MCF 10A (cell line): ENCODE measurements at regions of chr12 and their contacts with region 1.

Region 1: DNA sequence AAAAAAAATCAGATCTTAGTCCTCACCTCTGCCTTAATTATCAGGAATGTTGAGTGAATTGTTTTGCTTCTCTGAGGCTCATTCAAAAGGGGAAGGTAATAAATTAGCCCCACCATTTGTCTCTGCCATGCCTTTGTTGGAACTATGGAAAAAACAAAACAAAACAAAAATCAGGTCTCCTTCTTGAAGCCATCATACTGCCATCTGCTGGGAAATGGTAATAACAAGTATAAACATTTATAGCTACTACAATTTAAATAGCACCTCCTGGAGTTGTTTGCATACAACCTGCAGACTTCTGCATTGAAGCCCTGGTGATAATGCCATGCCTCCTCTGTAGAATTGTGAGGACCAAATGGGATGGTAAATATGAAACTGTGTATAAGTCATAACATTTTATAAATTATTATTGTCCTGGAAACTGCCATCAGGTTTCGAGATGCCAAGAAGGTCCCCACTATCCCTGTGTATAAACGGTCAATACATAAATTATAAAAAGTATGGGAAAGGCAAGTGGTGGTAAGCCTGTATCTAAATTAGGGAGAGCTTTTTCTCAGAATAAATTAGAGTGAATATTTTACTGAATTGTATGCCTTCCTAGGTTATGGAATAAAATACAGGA is 87.2 kb upstream of the FGD4 start:
- DNase-seq: peak; percentile 68
- H3K4me3 Mint-ChIP-seq: no peak overlapping the region
- H3K27ac Mint-ChIP-seq: peak overlapping the region; percentile 68
- H3K4me1 Mint-ChIP-seq: peaks cover 7% of the 10 kb centered on the region
- H3K27me3 Mint-ChIP-seq: no peaks in the 10 kb centered on the region
- CTCF ChIP-seq: peak; percentile 58

Region 2: DNA sequence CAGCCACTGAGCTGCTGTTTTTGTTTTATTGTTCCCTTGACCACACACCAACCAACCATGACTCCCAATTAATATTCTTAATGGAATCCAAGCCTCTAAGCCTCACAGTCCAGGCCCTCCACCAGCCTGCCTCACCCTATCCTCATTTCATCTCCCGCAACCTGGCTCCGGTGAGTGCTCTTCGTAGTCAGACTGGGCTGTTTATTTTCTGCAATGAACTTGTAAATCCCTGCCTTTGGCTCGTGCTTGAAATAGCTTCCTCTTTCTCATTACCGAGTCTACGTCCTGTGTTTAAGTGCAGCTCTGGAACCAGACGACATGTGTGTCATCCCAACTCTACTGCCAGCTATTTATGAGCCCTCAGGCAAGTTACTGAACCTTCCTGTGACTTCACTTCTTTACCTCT is 665.1 kb before region 1 on chr12:
- CTCF ChIA-PET with region 1: interaction called, 49 read pairs
- POLR2A ChIA-PET with region 1: no interaction called
- intact Hi-C with region 1: loop called (anchors 2 kb)
- DNase-seq: peak; percentile 49
- H3K4me3 Mint-ChIP-seq: no peak overlapping the region
- H3K27ac Mint-ChIP-seq: peak overlapping the region; percentile 28
- H3K4me1 Mint-ChIP-seq: peaks cover 10% of the 10 kb centered on the region
- H3K27me3 Mint-ChIP-seq: no peaks in the 10 kb centered on the region
- CTCF ChIP-seq: no peak

Region 3: DNA sequence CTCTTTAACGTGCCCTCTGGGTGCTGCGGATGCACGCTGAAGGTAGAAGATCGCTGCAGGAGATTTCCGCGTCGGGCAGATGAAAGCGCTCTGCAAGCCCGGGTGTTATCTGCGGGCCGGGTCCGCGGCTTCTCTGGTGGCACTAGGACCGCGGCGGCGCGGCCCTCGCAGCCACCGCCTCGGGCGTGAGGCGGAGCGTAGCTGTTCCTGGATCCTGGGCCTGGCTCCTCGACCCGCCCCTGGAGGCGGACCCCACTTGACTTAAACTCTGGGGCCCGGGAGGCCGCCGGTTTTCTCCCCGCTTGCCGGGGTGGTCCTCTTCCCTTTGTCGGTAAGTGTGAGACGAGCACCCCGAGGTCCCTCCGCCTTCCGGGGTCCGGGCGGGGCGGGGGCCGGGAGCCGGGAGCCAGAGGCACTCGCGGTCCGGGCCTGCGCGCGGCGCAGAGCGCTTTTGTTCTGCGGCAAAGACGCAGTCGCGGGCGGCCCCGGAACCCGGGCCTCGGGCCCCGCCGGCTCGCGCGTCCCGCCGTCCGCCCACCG is 352.9 kb before region 1 on chr12 and contains the start of gene RESF1:
- CTCF ChIA-PET with region 1: interaction called, 6 read pairs
- POLR2A ChIA-PET with region 1: interaction called, 3 read pairs
- intact Hi-C with region 1: loop called (anchors 5 kb)
- DNase-seq: peak; percentile 85
- H3K4me3 Mint-ChIP-seq: peak within 1 kb of the TSS; percentile 84
- H3K27ac Mint-ChIP-seq: peak within 1 kb of the TSS; percentile 16
- H3K4me1 Mint-ChIP-seq: peaks cover 17% of the 10 kb centered on the region
- H3K27me3 Mint-ChIP-seq: no peaks in the 10 kb centered on the region
- CTCF ChIP-seq: no peak
- total RNA-seq, gene RESF1: 14.7 and 18.7 TPM in 2 replicates

Region 4: GRCh38 chr12:32025906-32026305 is 286.3 kb before region 1 on chr12:
- CTCF ChIA-PET with region 1: no interaction called
- POLR2A ChIA-PET with region 1: no interaction called
- intact Hi-C with region 1: no loop called
- DNase-seq: no peak
- H3K4me3 Mint-ChIP-seq: no peak overlapping the region
- H3K27ac Mint-ChIP-seq: no peak overlapping the region
- H3K4me1 Mint-ChIP-seq: no peaks in the 10 kb centered on the region
- H3K27me3 Mint-ChIP-seq: peaks cover 4% of the 10 kb centered on the region
- CTCF ChIP-seq: no peak

Region 5: GRCh38 chr12:32062881-32063280 is 249.3 kb before region 1 on chr12:
- CTCF ChIA-PET with region 1: interaction called, 35 read pairs
- POLR2A ChIA-PET with region 1: interaction called, 6 read pairs
- intact Hi-C with region 1: loop called (anchors 1 kb)
- DNase-seq: no peak
- H3K4me3 Mint-ChIP-seq: no peak overlapping the region
- H3K27ac Mint-ChIP-seq: no peak overlapping the region
- H3K4me1 Mint-ChIP-seq: no peaks in the 10 kb centered on the region
- H3K27me3 Mint-ChIP-seq: no peaks in the 10 kb centered on the region
- CTCF ChIP-seq: no peak

Region 6: DNA sequence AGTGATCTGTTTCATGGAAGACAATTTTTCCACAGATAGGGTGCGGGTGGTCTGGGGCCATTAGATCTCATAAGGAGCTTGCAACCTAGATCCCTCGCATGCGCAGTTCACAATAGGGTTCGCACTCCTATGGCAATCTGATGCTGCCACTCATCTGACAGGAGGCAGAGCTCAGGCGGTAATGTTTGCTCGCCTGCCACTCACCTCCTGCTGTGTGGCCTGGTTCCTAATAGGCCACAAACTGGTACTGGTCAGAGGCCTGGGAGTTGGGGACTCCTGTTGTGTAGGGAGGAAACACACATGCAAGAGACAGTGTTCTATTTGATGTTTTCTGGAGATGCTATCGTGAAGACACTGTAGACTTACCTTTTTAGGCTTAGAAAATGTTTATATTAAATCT is 10.2 kb after region 1 on chr12:
- CTCF ChIA-PET with region 1: interaction called, 10 read pairs
- POLR2A ChIA-PET with region 1: interaction called, 3 read pairs
- intact Hi-C with region 1: no loop called
- DNase-seq: no peak
- H3K4me3 Mint-ChIP-seq: no peak overlapping the region
- H3K27ac Mint-ChIP-seq: no peak overlapping the region
- H3K4me1 Mint-ChIP-seq: no peaks in the 10 kb centered on the region
- H3K27me3 Mint-ChIP-seq: no peaks in the 10 kb centered on the region
- CTCF ChIP-seq: no peak

Region 7: DNA sequence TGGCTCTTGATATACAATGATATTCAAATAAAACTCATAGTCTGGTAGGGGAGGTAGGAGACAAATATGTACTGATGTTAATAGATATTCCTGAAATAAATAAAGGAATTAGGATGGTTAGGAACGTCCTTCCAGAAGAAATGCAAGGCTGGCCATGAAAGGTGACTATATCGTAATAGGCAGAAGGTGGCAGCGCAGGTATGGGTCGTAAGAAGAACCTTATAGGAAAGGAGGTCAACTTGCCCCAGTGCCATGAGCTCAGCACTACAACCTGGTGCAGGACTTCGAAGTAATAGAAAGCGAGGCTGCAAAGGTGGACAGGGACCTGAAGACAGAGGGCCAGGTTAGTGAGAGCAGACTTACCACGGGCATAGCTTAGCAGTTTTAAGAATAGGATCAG is 31.9 kb after region 1 on chr12:
- CTCF ChIA-PET with region 1: no interaction called
- POLR2A ChIA-PET with region 1: no interaction called
- intact Hi-C with region 1: no loop called
- DNase-seq: peak; percentile 4
- H3K4me3 Mint-ChIP-seq: no peak overlapping the region
- H3K27ac Mint-ChIP-seq: no peak overlapping the region
- H3K4me1 Mint-ChIP-seq: no peaks in the 10 kb centered on the region
- H3K27me3 Mint-ChIP-seq: no peaks in the 10 kb centered on the region
- CTCF ChIP-seq: no peak

Region 8: GRCh38 chr12:32413412-32413811 is 101.3 kb after region 1 on chr12:
- CTCF ChIA-PET with region 1: no interaction called
- POLR2A ChIA-PET with region 1: no interaction called
- intact Hi-C with region 1: no loop called
- DNase-seq: no peak
- H3K4me3 Mint-ChIP-seq: no peak overlapping the region
- H3K27ac Mint-ChIP-seq: no peak overlapping the region
- H3K4me1 Mint-ChIP-seq: peaks cover 43% of the 10 kb centered on the region
- H3K27me3 Mint-ChIP-seq: no peaks in the 10 kb centered on the region
- CTCF ChIP-seq: no peak

Region 9: GRCh38 chr12:32455607-32456071 is 143.5 kb after region 1 on chr12:
- CTCF ChIA-PET with region 1: no interaction called
- POLR2A ChIA-PET with region 1: no interaction called
- intact Hi-C with region 1: no loop called
- DNase-seq: peak; percentile 75
- H3K4me3 Mint-ChIP-seq: peak overlapping the region; percentile 48
- H3K27ac Mint-ChIP-seq: peak overlapping the region; percentile 91
- H3K4me1 Mint-ChIP-seq: peaks cover 60% of the 10 kb centered on the region
- H3K27me3 Mint-ChIP-seq: no peaks in the 10 kb centered on the region
- CTCF ChIP-seq: peak; percentile 78